ENCODE measurements at regions of chr1 and their contacts with region 1.

Region 1: GRCh38 chr1:24137031-24137430 is 5.9 kb downstream of the IL22RA1 start:
- DNase-seq: no peak
- H3K4me3 ChIP-seq: no peak overlapping the region
- CTCF ChIP-seq: no peak

Region 2: GRCh38 chr1:23889074-23889473 is 248.0 kb before region 1 on chr1:
- in situ Hi-C with region 1: no loop called
- DNase-seq: no peak
- H3K4me3 ChIP-seq: no peak overlapping the region
- CTCF ChIP-seq: no peak

Region 3: DNA sequence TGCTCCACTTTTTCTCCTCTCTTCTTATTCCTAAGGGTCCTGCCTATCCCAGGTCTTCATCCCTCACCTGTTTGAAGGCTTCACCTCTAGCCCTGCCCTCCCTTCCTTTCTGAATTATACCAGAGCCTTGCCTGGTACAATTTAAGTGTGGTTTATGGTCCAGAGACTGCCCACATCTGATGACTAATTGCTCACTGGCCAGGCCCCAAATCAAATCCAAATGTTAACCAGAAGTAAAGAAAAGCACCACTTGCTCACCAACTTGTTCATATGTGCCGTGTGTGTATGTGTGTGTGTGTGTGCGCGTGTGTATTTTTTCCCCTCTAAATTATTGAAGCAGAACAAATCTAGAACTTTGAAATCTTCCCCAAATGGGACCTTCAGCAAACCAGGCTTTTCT is 51.5 kb before region 1 on chr1:
- in situ Hi-C with region 1: loop called (anchors 5 kb)
- DNase-seq: peak; percentile 5
- H3K4me3 ChIP-seq: no peak overlapping the region
- CTCF ChIP-seq: no peak